Posterior cingulate gyrus (tissue), 11 donors: ENCODE measurements at regions of chr18 and their contacts with region 1.

Region 1: DNA sequence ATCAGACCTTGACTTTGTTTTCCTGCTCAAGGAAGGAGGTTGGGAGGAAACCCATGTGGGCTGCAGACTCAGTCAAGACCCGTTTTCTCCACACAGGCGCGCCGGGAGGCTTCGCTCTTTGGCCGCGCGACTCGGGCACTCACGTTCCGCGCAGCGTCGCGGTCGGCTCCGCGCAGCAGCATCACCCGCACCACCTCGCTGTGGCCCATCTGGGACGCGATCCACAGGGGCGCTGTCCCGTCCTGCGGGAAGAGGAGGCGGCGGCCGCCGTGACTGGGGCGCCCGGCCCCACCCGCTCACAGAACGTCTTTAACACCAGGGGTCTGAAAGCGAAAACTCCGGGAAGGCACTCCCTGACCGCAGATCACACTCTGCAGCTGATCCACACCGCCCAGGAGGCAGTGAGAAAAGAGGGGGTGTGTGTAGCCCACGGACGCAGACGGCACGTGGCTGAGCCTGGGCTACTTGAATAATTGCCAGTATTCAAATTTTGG is 33.1 kb upstream of the NPC1 start:
- DNase-seq: peak in 8 of 10 donors; percentile 14 to 90 (median 34)

Region 2: GRCh38 chr18:22883179-22883578 is 736.3 kb before region 1 on chr18:
- intact Hi-C with region 1: no loop called
- DNase-seq: no peak

Region 3: GRCh38 chr18:23341383-23341782 is 278.1 kb before region 1 on chr18:
- intact Hi-C with region 1: no loop called
- DNase-seq: no peak

Region 4: DNA sequence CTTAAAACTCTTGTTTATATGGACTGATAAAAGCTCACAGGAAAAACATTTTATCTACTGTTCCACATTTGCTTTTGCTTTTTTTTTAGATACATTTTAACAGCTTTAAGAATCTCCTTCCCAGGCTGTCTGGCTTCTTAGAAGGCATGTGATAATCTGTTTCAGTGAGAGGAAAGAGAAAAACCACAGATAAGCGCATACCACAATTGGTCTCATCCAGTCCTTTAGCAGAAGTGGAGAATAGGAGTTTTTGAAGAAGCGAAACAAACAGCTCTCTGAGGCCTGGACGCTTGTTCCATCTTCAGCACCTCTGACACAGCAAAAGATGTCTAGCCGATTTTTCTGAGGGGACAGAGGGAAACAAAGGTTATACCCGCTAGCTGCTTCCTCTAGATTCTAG is 78.6 kb before region 1 on chr18:
- intact Hi-C with region 1: no loop called
- DNase-seq: no peak

Region 5: GRCh38 chr18:23812546-23813440 is 193.4 kb after region 1 on chr18:
- intact Hi-C with region 1: loop called (anchors 1 kb)
- DNase-seq: no peak

Region 6: DNA sequence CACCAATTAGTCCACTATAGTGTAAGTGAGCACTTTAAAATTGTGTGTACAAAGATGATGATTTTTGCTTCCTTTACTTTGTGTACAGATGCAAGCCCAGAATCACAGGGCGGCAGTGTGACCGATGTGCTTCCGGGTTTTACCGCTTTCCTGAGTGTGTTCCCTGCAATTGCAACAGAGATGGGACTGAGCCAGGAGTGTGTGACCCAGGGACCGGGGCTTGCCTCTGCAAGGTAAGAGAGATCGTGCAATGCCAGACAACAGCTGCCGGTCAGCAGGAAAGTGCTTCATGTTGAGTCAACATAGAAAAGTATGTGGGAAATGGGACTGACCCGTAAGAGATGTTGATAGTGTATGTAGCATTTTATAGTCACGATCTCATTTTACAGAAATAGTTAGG is 238.3 kb after region 1 on chr18:
- intact Hi-C with region 1: no loop called
- DNase-seq: no peak

Region 7: GRCh38 chr18:23918401-23919032 is 299.1 kb after region 1 on chr18:
- intact Hi-C with region 1: loop called (anchors 5 kb)
- DNase-seq: peak; percentile 27 to 91 (median 68)